ENCODE measurements at regions of chr19 and their contacts with region 1.

Region 1: GRCh38 chr19:13060964-13061927 is 41.4 kb downstream of the LYL1 start:
- DNase-seq: peak; percentile 93
- ATAC-seq: peak; percentile 85
- H3K4me3 Mint-ChIP-seq: peak overlapping the region; percentile 64
- H3K27ac Mint-ChIP-seq: no peak overlapping the region
- H3K4me1 Mint-ChIP-seq: peaks cover 26% of the 10 kb centered on the region
- H3K27me3 Mint-ChIP-seq: peaks cover 76% of the 10 kb centered on the region
- CTCF ChIP-seq: peak; percentile 76

Region 2: GRCh38 chr19:12974301-12975220 is 86.7 kb before region 1 on chr19:
- CTCF ChIA-PET with region 1: interaction called, 188 read pairs
- POLR2A ChIA-PET with region 1: interaction called, 3 read pairs
- DNase-seq: no peak
- ATAC-seq: no peak
- H3K4me3 Mint-ChIP-seq: no peak overlapping the region
- H3K27ac Mint-ChIP-seq: no peak overlapping the region
- H3K4me1 Mint-ChIP-seq: no peaks in the 10 kb centered on the region
- H3K27me3 Mint-ChIP-seq: peaks cover 5% of the 10 kb centered on the region
- CTCF ChIP-seq: no peak

Region 3: DNA sequence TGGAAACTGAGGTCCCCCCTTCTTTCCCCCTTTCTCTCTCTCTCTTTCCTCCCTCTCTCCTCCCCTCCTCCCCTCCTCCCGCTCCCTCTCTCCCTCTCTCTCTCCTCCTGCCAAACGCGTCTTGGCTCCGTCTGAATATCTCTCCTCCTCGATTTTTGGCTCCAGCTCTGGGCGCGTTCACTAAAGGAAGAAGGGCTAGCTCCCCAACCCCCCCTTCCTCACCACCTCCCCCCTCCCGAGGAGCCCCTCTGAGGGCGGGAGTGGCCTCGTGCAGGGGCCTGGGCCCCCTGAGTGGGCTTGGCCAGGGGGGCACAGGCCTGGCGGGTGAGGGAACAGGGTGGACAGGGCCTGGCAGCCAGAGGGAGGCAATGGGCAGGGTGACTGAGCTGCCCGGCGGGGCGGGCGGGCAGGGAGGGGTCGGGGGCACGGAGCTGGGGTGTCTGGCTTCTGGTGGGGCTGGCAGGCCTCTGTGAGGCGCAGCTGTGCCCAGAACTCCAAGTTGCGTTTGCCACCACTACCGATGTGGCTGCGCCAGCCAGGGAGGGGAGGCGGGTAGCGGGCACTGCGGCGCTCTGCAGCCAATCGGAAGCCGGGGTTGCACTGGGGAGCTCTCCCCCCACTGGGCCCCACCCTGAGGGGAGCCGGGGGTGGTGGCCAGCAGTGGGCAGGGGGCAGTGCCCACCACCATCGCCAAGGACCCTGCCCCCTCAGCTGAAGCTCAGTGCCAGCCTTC is 58.9 kb before region 1 on chr19:
- CTCF ChIA-PET with region 1: interaction called, 33 read pairs
- POLR2A ChIA-PET with region 1: no interaction called
- DNase-seq: no peak
- ATAC-seq: no peak
- H3K4me3 Mint-ChIP-seq: no peak overlapping the region
- H3K27ac Mint-ChIP-seq: no peak overlapping the region
- H3K4me1 Mint-ChIP-seq: no peaks in the 10 kb centered on the region
- H3K27me3 Mint-ChIP-seq: peaks cover 88% of the 10 kb centered on the region
- CTCF ChIP-seq: no peak

Region 4: GRCh38 chr19:13022859-13023636 is 38.2 kb before region 1 on chr19:
- CTCF ChIA-PET with region 1: interaction called, 293 read pairs
- POLR2A ChIA-PET with region 1: interaction called, 4 read pairs
- DNase-seq: peak; percentile 61
- ATAC-seq: 0 out of 2 replicates have a peak, but pooled peaks have one; percentile 6
- H3K4me3 Mint-ChIP-seq: peak overlapping the region; percentile 57
- H3K27ac Mint-ChIP-seq: no peak overlapping the region
- H3K4me1 Mint-ChIP-seq: peaks cover 71% of the 10 kb centered on the region
- H3K27me3 Mint-ChIP-seq: peaks cover 100% of the 10 kb centered on the region
- CTCF ChIP-seq: no peak

Region 5: GRCh38 chr19:13044231-13044836 is 16.9 kb before region 1 on chr19:
- CTCF ChIA-PET with region 1: interaction called, 23 read pairs
- POLR2A ChIA-PET with region 1: no interaction called
- DNase-seq: no peak
- ATAC-seq: no peak
- H3K4me3 Mint-ChIP-seq: no peak overlapping the region
- H3K27ac Mint-ChIP-seq: no peak overlapping the region
- H3K4me1 Mint-ChIP-seq: peaks cover 4% of the 10 kb centered on the region
- H3K27me3 Mint-ChIP-seq: peaks cover 79% of the 10 kb centered on the region
- CTCF ChIP-seq: no peak

Region 6: DNA sequence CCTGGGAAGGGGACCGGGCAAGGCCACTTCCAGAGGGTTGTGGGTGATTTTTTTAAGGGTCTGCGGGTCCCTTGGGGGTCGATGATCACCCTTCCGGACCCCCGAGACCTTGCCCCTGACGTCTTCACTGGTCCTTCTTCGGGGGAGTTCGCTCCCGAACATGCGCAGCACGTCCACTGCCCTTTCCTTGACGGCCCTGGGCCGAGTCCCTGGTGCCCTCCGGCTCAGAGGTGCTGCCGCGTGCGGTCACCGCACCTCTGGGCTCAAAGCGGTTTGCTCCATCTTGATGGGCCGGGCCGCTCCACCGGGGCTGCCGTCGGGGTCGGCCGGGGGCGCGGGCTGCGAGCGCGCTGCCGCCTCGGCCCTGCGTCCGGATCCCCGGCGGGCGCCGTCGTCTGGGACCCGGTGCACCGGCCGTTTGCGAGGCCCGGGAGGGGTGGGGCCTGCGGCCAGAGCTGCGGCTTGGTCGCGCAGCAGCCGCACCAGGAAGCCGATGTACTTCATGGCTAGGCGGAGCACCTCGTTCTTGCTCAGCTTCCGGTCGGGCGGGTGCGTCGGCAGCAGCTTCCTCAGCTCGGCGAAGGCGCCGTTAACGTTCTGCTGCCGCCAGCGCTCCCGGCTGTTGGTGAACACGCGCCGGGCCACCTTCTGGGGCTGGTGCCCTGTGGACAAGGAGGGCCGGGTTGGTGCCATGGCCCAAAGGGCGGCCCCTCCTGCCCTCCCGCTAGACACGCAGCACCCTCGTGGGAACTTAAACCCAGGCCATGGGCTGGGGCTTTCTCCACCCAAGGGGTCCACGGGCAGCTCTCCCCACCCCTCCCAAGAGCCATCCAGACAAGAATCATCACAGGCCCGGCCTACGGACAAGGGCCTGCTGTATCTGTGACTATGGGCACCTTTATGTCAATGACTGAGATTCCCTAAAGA is 38.1 kb after region 1 on chr19:
- CTCF ChIA-PET with region 1: interaction called, 177 read pairs
- POLR2A ChIA-PET with region 1: no interaction called
- DNase-seq: peak; percentile 69
- ATAC-seq: no peak
- H3K4me3 Mint-ChIP-seq: peak overlapping the region; percentile 57
- H3K27ac Mint-ChIP-seq: no peak overlapping the region
- H3K4me1 Mint-ChIP-seq: peaks cover 23% of the 10 kb centered on the region
- H3K27me3 Mint-ChIP-seq: peaks cover 77% of the 10 kb centered on the region
- CTCF ChIP-seq: no peak